ENCODE measurements at regions of chr11 and their contacts with region 1.

Region 1: DNA sequence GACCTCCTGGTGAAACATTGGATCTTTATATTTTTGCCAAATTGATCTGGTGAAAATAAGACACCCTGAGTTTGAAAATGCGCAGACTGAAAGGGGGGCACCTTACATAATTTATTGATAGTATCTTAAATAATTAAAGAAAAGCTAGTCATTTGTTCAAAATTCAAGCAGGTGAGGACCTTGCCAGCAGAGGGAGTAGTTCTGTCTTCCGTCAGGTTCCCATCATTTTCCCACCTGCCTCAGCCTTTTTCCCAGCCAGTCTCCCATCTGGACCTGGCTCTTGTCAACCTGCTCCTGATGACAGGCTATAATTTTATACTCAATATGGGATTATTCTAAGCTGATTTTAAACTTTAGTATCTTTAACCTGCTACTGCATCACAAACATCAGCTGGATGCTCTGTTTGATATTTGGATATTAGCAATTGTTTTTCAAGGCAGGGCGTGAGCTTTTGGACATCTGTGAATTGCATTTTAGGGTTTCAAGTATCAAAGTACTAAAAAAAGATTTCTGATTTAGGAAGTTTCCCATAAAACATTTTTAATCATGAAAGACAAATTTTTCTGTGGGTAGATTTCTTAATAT is 132.0 kb downstream of the ELP4 start:
- DNase-seq: no peak
- ATAC-seq: no peak; the same call in 1 of the 2 replicates
- H3K4me3 ChIP-seq: no peak overlapping the region
- H3K27ac ChIP-seq: no peak overlapping the region
- H3K4me1 ChIP-seq: no peaks in the 10 kb centered on the region
- H3K27me3 ChIP-seq: no peaks in the 10 kb centered on the region
- CTCF ChIP-seq: peak; percentile 84

Region 2: GRCh38 chr11:31958076-31958735 is 316.6 kb after region 1 on chr11:
- CTCF ChIA-PET with region 1: no interaction called
- POLR2A ChIA-PET with region 1: no interaction called
- in situ Hi-C with region 1: no loop called
- intact Hi-C with region 1: loop called (anchors 2 kb)
- DNase-seq: peak; percentile 27
- ATAC-seq: peak; percentile 92
- H3K4me3 ChIP-seq: no peak overlapping the region
- H3K27ac ChIP-seq: no peak overlapping the region
- H3K4me1 ChIP-seq: no peaks in the 10 kb centered on the region
- H3K27me3 ChIP-seq: no peaks in the 10 kb centered on the region
- CTCF ChIP-seq: peak; percentile 89